ENCODE measurements at regions of chrX and their contacts with region 1.

Region 1: DNA sequence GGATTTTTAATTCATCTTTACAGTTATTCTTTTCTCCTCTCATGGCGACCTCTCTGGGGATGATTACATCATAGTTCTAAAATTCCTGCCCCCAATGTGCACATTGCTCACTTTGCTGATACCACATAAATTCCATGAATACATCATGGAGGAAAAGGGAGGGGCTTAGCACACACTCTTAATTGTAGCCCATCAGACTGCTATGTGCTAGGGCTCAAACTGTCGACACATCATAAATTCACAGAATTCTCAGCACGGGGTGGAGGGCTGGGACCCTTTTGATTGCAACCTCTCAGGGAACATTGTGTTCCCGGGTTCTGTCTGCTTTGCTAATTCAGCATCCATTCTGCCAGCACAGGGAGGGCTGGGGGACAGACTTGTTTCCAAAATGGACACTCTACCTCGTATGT is 592.9 kb downstream of the BCOR start:
- DNase-seq: no peak
- H3K4me3 Mint-ChIP-seq: no peak overlapping the region
- H3K27ac Mint-ChIP-seq: no peak overlapping the region
- H3K4me1 Mint-ChIP-seq: peaks cover 26% of the 10 kb centered on the region
- H3K27me3 Mint-ChIP-seq: peaks cover 6% of the 10 kb centered on the region

Region 2: DNA sequence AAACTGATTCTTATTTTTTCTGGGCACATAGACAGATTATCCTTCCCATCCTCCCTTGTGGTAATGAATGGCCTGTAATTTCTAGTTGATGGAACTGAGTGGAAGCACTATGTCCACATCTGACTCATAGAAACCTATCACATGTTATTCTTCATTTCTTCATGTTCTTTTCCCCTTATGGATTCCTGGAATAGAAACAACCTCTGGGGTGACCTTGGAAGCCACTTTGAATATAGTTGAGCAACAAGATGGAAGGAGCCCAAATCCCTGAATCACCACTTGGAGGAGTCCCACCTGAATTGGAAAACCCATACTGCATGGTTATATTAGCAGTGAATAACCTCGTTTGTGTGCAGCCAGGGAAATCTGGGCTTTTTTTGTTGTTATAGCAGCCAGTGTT is 565.8 kb before region 1 on chrX:
- intact Hi-C with region 1: no loop called
- DNase-seq: no peak
- H3K4me3 Mint-ChIP-seq: no peak overlapping the region
- H3K27ac Mint-ChIP-seq: no peak overlapping the region
- H3K4me1 Mint-ChIP-seq: no peaks in the 10 kb centered on the region
- H3K27me3 Mint-ChIP-seq: no peaks in the 10 kb centered on the region

Region 3: GRCh38 chrX:39439906-39440798 is 64.7 kb before region 1 on chrX:
- intact Hi-C with region 1: loop called (anchors 5 kb)
- DNase-seq: peak; percentile 8
- H3K4me3 Mint-ChIP-seq: no peak overlapping the region
- H3K27ac Mint-ChIP-seq: peak overlapping the region; percentile 91
- H3K4me1 Mint-ChIP-seq: peaks cover 44% of the 10 kb centered on the region
- H3K27me3 Mint-ChIP-seq: no peaks in the 10 kb centered on the region

Region 4: DNA sequence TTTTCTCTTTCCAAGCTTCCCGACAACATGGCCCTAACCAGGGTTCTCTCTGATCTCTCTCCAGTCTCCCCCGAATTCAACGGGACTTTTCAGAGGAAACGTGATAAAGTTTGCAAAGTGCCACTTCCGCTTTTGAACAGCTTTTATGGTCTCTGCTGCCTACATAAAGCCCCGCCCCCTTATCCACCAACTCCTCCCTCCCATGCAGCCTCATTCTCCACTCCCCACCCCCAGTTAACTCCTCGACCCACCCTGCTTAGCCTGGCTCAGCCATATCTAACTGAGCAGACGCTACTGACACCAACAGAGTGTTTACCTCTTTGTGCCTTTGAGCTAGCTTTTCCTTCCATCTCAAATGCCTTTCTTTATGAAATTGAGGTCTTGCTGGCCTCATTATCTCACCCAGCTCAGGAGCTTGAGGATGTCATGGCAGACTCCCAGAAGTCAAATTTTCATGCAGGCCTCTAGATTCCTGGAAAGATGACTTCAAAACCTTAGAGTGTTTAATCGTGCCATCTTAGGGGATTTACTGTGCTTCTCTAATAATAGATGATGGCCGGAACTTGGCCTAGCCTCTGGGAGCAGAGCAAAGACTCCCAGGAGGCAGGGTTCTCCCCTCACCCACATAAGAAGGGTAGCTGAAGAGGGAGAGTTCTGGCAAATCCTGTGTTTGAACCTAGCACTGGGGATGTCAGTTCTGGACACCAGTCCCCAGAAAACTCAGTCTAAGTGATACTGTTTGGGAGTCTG is 13.1 kb before region 1 on chrX:
- intact Hi-C with region 1: loop called (anchors 2 kb)
- DNase-seq: peak; percentile 36
- H3K4me3 Mint-ChIP-seq: peak overlapping the region; percentile 24
- H3K27ac Mint-ChIP-seq: peak overlapping the region; percentile 63
- H3K4me1 Mint-ChIP-seq: peaks cover 41% of the 10 kb centered on the region
- H3K27me3 Mint-ChIP-seq: no peaks in the 10 kb centered on the region

Region 5: DNA sequence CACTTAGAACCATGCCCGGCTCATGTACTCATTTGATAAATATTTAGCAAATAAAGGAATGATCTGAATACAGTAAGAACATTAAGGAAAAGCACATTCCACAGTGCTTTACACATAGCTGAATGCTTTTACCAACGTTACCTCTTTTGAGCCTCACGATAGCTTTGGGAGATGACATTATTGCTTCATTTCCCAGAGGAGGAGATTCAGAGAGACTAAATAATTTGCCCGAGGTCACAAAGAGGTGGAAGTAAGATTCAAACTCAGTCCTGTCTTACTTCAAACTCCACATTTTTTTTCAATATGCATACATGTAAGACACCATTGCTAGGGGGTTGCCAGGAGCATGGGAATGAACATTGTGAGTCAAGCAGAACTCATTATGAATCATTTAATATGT is 54.4 kb after region 1 on chrX:
- intact Hi-C with region 1: no loop called
- DNase-seq: no peak
- H3K4me3 Mint-ChIP-seq: no peak overlapping the region
- H3K27ac Mint-ChIP-seq: no peak overlapping the region
- H3K4me1 Mint-ChIP-seq: no peaks in the 10 kb centered on the region
- H3K27me3 Mint-ChIP-seq: no peaks in the 10 kb centered on the region

Region 6: GRCh38 chrX:39578354-39578869 is 73.6 kb after region 1 on chrX:
- intact Hi-C with region 1: loop called (anchors 2 kb)
- DNase-seq: peak; percentile 16
- H3K4me3 Mint-ChIP-seq: peak overlapping the region; percentile 59
- H3K27ac Mint-ChIP-seq: peak overlapping the region; percentile 82
- H3K4me1 Mint-ChIP-seq: peaks cover 28% of the 10 kb centered on the region
- H3K27me3 Mint-ChIP-seq: no peaks in the 10 kb centered on the region